Ovary (tissue), 10 donors: ENCODE measurements at regions of chr1 and their contacts with region 1.

Region 1: DNA sequence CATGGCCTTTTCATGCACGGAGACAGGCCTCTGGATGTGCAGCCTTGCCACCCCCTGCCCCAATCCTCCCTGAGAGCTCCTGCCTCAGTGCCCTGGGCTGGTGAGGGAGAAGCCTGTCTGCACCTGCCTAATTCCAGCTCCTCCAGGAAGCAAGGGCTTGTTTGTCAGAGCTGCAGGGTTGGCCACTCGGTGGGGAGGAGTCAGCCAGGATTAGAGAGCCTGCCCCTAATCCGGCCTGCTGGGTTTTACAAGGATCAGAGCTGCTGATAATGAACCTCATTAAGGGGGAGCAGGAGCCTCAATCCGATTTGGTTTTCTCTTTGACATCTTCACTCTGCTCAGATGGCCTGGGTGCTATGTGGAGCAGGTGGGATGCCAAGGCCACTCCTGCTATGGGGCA is 31.9 kb upstream of the LHX4 start:
- DNase-seq: no peak
- H3K4me3 ChIP-seq: no peak overlapping the region
- H3K27ac ChIP-seq: no peak overlapping the region
- H3K4me1 ChIP-seq: no peaks in the 10 kb centered on the region
- H3K27me3 ChIP-seq: no peaks in the 10 kb centered on the region
- CTCF ChIP-seq: no peak
- EP300 ChIP-seq: no peak
- POLR2A ChIP-seq: no peak

Region 2: GRCh38 chr1:180070286-180070685 is 127.9 kb before region 1 on chr1:
- intact Hi-C with region 1: no loop called
- DNase-seq: no peak
- H3K4me3 ChIP-seq: no peak overlapping the region
- H3K27ac ChIP-seq: no peak overlapping the region
- H3K4me1 ChIP-seq: no peaks in the 10 kb centered on the region
- H3K27me3 ChIP-seq: no peaks in the 10 kb centered on the region
- CTCF ChIP-seq: no peak
- EP300 ChIP-seq: no peak
- POLR2A ChIP-seq: no peak

Region 3: GRCh38 chr1:180131510-180131909 is 66.7 kb before region 1 on chr1:
- intact Hi-C with region 1: no loop called
- DNase-seq: no peak
- H3K4me3 ChIP-seq: no peak overlapping the region
- H3K27ac ChIP-seq: no peak overlapping the region
- H3K4me1 ChIP-seq: no peaks in the 10 kb centered on the region
- H3K27me3 ChIP-seq: no peaks in the 10 kb centered on the region
- CTCF ChIP-seq: no peak
- EP300 ChIP-seq: no peak
- POLR2A ChIP-seq: no peak

Region 4: DNA sequence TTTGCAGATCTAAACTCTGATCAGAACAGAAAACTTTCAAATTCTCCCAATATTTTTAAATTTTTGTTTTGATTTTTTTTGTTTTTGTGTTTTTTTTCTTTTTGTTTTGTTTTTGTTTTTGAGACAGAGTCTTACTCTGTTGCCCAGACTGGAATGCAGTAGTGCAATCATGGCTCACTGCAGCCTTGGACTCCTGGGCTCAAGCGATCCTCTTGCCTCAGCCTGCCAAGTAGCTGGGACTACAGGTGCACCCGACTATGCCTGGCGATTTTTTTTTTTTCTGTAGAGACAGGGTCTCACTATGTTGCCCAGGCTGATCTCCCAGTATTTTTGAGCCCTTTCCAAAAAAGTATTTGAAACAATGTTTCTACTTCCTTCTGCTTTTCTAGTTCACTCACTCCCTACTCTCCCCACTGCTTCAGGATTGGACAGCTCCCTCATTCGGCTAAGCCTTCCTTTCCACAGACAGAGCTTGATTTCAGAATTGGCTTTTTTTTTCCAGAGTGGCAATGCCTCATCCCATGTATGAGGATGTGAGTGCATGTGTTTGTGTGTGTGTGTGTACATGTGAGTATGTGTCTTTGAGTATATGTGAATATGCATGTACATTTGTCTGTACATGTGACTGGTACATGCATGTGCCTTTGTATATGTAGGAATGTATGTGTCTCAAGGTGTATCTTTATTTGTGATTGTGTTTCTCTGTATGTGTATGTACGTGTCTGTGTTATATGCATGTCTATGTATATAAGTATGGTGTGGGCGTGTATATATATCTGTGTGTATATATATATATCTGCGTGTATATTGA is 43.7 kb after region 1 on chr1:
- intact Hi-C with region 1: no loop called
- DNase-seq: no peak
- H3K4me3 ChIP-seq: no peak overlapping the region
- H3K27ac ChIP-seq: no peak overlapping the region
- H3K4me1 ChIP-seq: no peaks in the 10 kb centered on the region
- H3K27me3 ChIP-seq: no peaks in the 10 kb centered on the region
- CTCF ChIP-seq: no peak
- EP300 ChIP-seq: no peak
- POLR2A ChIP-seq: no peak

Region 5: DNA sequence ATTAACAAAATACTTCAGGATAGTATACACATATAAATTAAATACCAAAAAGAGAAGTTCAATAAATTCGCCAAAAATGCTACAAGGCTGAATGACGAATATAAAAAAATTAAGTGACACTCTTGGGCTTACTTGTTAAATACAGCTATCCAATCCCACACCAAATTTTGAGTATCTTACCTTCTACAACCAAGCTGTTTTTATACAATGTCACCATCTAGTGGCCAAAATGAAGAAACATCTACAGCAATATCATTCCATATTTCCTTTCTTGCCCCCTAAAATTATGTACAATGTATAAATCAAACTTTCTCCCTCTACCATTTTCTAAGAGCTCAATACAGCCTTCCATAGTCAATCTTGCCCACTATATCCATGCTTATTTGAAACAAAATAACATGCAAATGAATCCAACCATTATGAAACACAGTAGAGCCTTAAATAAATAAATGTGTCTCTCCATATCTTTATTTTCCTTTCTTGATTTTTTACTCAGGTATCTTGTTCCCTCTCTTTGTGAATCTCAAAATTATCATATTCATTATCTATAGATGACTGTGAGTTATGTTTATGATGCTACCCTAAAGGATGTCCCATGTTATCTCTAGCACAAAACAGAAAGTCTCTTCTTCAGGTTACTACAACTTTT is 217.9 kb after region 1 on chr1:
- intact Hi-C with region 1: loop called in 1 of 4 experiments (anchors 10 kb)
- DNase-seq: no peak
- H3K4me3 ChIP-seq: no peak overlapping the region
- H3K27ac ChIP-seq: no peak overlapping the region
- H3K4me1 ChIP-seq: no peaks in the 10 kb centered on the region
- H3K27me3 ChIP-seq: no peaks in the 10 kb centered on the region
- CTCF ChIP-seq: peak; percentile 17 to 52 (median 32)
- EP300 ChIP-seq: no peak
- POLR2A ChIP-seq: no peak

Region 6: GRCh38 chr1:180482425-180483275 is 284.5 kb after region 1 on chr1:
- intact Hi-C with region 1: loop called in 1 of 4 experiments (anchors 10 kb)
- DNase-seq: no peak
- H3K4me3 ChIP-seq: no peak overlapping the region
- H3K27ac ChIP-seq: no peak overlapping the region
- H3K4me1 ChIP-seq: no peaks in the 10 kb centered on the region
- H3K27me3 ChIP-seq: no peaks in the 10 kb centered on the region
- CTCF ChIP-seq: peak; percentile 28 to 53 (median 46)
- EP300 ChIP-seq: no peak
- POLR2A ChIP-seq: no peak

Region 7: DNA sequence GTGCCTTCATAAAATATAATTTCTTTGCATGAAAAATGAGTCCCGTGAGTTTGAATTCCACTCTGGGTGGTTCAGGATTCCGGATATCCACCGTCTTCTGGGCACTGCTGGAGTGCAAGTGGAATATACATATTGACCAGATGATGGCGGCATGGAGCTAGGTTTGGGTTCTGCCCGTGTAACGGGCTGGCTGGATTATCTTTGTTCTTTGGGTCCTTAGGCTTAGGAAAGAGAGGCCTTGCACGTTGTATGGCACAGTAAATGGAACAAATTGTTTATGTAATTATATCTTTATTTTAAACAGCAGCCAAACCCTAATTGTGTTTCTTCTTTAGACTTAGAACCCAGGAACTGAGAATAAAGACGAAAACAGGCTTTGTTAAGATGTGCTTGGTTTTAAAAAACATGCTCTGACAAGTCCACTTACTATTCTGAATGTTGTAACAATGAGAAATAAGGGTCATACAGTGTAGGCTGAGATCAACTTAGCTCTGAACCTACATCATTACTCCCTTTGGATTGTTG is 317.7 kb after region 1 on chr1:
- intact Hi-C with region 1: no loop called
- DNase-seq: peak; percentile 55 to 74 (median 57)
- H3K4me3 ChIP-seq: no peak overlapping the region
- H3K27ac ChIP-seq: no peak overlapping the region
- H3K4me1 ChIP-seq: no peaks in the 10 kb centered on the region
- H3K27me3 ChIP-seq: no peaks in the 10 kb centered on the region
- CTCF ChIP-seq: peak; percentile 64 to 80 (median 73)
- EP300 ChIP-seq: no peak
- POLR2A ChIP-seq: no peak